ENCODE measurements at regions of chr11 and their contacts with region 1.

Region 1: DNA sequence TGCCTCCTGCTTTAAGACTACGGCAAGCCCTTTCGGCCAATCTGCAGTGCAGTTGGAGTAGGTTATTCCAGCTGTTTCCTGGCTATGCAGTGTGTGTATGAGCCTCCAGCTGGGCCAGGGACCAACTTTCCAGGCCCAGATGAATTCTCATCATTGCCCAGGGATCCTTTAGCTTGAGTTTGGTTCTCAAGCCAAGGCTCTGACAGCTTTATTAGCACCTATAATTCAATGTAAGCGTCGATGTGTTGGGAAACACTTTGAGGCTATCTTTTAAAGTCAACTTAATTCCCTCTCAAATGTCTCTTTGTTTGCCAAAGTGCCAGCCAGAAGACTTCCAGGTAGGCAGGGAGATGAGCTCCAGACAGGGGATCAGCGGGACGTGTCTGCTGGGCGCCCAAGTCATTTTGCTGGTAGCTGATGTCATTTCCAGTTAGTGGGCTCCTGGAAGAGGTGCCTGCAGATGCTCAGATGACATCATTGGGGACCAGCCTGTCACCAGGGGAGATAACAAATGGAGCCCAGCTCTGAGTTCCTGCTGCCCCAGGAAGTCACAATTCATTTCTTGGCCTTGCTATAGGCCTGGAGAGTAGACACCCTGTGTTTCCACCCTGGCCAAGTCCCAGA is 520.4 kb downstream of the SOX6 start:
- DNase-seq: peak; percentile 83
- H3K4me3 ChIP-seq: no peak overlapping the region
- H3K27ac ChIP-seq: peak overlapping the region in 3 of 4 donors; percentile 13 to 64 (median 47)
- H3K4me1 ChIP-seq: peaks cover 0 to 11% (median 5%) of the 10 kb centered on the region in 4 donors
- H3K27me3 ChIP-seq: peaks cover 0 to 19% (median 0%) of the 10 kb centered on the region in 3 donors
- CTCF ChIP-seq: no peak
- EP300 ChIP-seq: peak; percentile 27 to 88 (median 76)
- POLR2A ChIP-seq: no peak

Region 2: GRCh38 chr11:15937601-15938120 is 101.8 kb after region 1 on chr11:
- intact Hi-C with region 1: loop called (anchors 2 kb)
- DNase-seq: peak; percentile 78
- H3K4me3 ChIP-seq: peak overlapping the region in 3 of 4 donors; percentile 2 to 27 (median 26)
- H3K27ac ChIP-seq: peak overlapping the region; percentile 12 to 52 (median 46)
- H3K4me1 ChIP-seq: peaks cover 0 to 20% (median 13%) of the 10 kb centered on the region in 4 donors
- H3K27me3 ChIP-seq: peaks cover 0 to 5% (median 0%) of the 10 kb centered on the region in 3 donors
- CTCF ChIP-seq: no peak
- EP300 ChIP-seq: no peak
- POLR2A ChIP-seq: no peak

Measured in sigmoid colon (tissue), 7 donors.